Natural killer cell (primary cell): ENCODE measurements at regions of chr1 and their contacts with region 1.

Region 1: DNA sequence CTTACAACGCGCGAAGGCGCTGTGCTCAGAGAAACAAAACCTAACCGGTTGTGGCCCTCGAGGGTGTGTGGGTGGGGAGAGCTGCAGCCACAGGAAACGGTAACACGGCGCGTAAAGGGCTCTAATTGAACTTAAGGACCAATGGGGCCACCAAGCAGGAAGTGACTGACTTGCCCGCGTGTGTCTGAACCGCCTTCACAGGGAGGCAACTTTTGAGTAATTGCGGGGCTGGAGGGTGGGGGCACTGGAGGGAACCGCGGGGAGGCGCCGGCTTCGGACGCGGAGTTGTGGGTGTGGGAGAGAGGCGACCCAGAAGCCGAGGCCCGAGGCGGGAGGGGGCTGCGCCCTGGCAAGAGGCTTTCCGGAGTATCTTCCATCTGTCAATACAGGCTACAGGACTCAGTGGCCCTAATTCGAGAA is 577 bp upstream of the PNRC2 start:
- DNase-seq: peak; percentile 85 to 96
- ATAC-seq: peak; percentile 77 to 88 (median 80)
- H3K4me3 ChIP-seq: peak overlapping the region; percentile 96
- H3K4me3 Mint-ChIP-seq: peak overlapping the region; percentile 100
- H3K27ac ChIP-seq: peak overlapping the region; percentile 98
- H3K27ac Mint-ChIP-seq: peak overlapping the region; percentile 100
- H3K4me1 ChIP-seq: peaks cover 22% of the 10 kb centered on the region
- H3K4me1 Mint-ChIP-seq: peaks cover 44 to 45% of the 10 kb centered on the region in 2 donors
- H3K27me3 ChIP-seq: no peaks in the 10 kb centered on the region
- H3K27me3 Mint-ChIP-seq: no peaks in the 10 kb centered on the region
- CTCF ChIP-seq: peak; percentile 33

Region 2: GRCh38 chr1:23899070-23899469 is 60.0 kb before region 1 on chr1:
- intact Hi-C with region 1: loop called (anchors 5 kb)
- DNase-seq: peak in 1 of 2 donors; percentile 21
- ATAC-seq: peak; percentile 53 to 67 (median 59)
- H3K4me3 ChIP-seq: no peak overlapping the region
- H3K4me3 Mint-ChIP-seq: peak overlapping the region; percentile 65
- H3K27ac ChIP-seq: no peak overlapping the region
- H3K27ac Mint-ChIP-seq: peak overlapping the region in 1 of 2 donors; percentile 56
- H3K4me1 ChIP-seq: peaks cover 84% of the 10 kb centered on the region
- H3K4me1 Mint-ChIP-seq: peaks cover 34 to 44% of the 10 kb centered on the region in 2 donors
- H3K27me3 ChIP-seq: no peaks in the 10 kb centered on the region
- H3K27me3 Mint-ChIP-seq: peaks cover 30 to 31% of the 10 kb centered on the region in 2 donors
- CTCF ChIP-seq: no peak

Region 3: GRCh38 chr1:23930861-23931490 is 28.1 kb before region 1 on chr1:
- intact Hi-C with region 1: no loop called
- DNase-seq: no peak
- ATAC-seq: no peak
- H3K4me3 ChIP-seq: no peak overlapping the region
- H3K4me3 Mint-ChIP-seq: no peak overlapping the region
- H3K27ac ChIP-seq: peak overlapping the region; percentile 35
- H3K27ac Mint-ChIP-seq: no peak overlapping the region
- H3K4me1 ChIP-seq: peaks cover 5% of the 10 kb centered on the region
- H3K4me1 Mint-ChIP-seq: no peaks in the 10 kb centered on the region
- H3K27me3 ChIP-seq: no peaks in the 10 kb centered on the region
- H3K27me3 Mint-ChIP-seq: peaks cover 0 to 6% of the 10 kb centered on the region in 2 donors
- CTCF ChIP-seq: no peak

Region 4: GRCh38 chr1:23979878-23980724 is 21.1 kb after region 1 on chr1 and contains the start of gene SRSF10:
- intact Hi-C with region 1: loop called (anchors 1 kb)
- DNase-seq: peak; percentile 96 to 100
- ATAC-seq: peak; percentile 94 to 99 (median 95)
- H3K4me3 ChIP-seq: peak within 1 kb of the TSS; percentile 97
- H3K4me3 Mint-ChIP-seq: peak within 1 kb of the TSS; percentile 97
- H3K27ac ChIP-seq: peak within 1 kb of the TSS; percentile 99
- H3K27ac Mint-ChIP-seq: peak within 1 kb of the TSS; percentile 94 to 98
- H3K4me1 ChIP-seq: peaks cover 16% of the 10 kb centered on the region
- H3K4me1 Mint-ChIP-seq: peaks cover 48 to 52% of the 10 kb centered on the region in 2 donors
- H3K27me3 ChIP-seq: no peaks in the 10 kb centered on the region
- H3K27me3 Mint-ChIP-seq: no peaks in the 10 kb centered on the region
- CTCF ChIP-seq: peak; percentile 27
- total RNA-seq, gene SRSF10: 221 to 281 (median 237) TPM

Region 5: DNA sequence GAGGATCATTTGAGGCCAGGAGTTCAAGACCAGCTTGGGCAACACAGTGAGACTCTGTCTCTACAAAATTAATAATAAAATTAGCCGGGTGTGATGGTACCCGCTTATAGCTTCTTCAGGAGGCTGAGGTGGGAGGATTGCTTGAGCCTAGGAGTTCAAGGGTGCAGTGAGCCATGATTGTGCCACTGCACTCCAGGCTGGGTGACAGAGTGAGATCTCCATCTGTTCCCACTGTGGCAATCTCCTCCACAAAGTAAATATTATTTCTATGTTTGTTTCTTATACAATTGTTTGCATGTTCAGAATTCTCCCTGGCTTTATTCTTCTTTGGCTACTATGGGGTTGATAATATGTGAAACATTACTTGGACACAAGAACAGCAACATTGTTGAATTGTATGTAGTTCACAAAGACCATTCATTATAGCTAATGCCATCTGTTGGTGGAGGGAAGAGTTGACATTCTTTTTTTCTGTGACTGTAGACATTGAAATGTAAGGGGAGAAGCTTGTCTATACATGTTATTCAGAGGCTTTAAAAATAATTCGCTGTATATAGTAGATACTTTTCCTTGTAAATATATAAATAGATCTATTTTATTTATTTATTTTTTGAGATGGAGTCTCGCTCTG is 68.9 kb after region 1 on chr1:
- intact Hi-C with region 1: loop called (anchors 1 kb)
- DNase-seq: peak in 1 of 2 donors; percentile 51
- ATAC-seq: no peak
- H3K4me3 ChIP-seq: no peak overlapping the region
- H3K4me3 Mint-ChIP-seq: no peak overlapping the region
- H3K27ac ChIP-seq: no peak overlapping the region
- H3K27ac Mint-ChIP-seq: no peak overlapping the region
- H3K4me1 ChIP-seq: no peaks in the 10 kb centered on the region
- H3K4me1 Mint-ChIP-seq: no peaks in the 10 kb centered on the region
- H3K27me3 ChIP-seq: no peaks in the 10 kb centered on the region
- H3K27me3 Mint-ChIP-seq: no peaks in the 10 kb centered on the region
- CTCF ChIP-seq: no peak